Mammary epithelial cell (primary cell): ENCODE measurements at regions of chr1 and their contacts with region 1.

Region 1: GRCh38 chr1:201361652-201362504 is 15.6 kb downstream of the TNNT2 start:
- DNase-seq: peak; percentile 29
- H3K4me3 ChIP-seq: no peak overlapping the region
- H3K27ac ChIP-seq: no peak overlapping the region
- H3K4me1 ChIP-seq: peaks cover 11% of the 10 kb centered on the region
- H3K27me3 ChIP-seq: no peaks in the 10 kb centered on the region
- CTCF ChIP-seq: peak; percentile 86 to 93

Region 2: DNA sequence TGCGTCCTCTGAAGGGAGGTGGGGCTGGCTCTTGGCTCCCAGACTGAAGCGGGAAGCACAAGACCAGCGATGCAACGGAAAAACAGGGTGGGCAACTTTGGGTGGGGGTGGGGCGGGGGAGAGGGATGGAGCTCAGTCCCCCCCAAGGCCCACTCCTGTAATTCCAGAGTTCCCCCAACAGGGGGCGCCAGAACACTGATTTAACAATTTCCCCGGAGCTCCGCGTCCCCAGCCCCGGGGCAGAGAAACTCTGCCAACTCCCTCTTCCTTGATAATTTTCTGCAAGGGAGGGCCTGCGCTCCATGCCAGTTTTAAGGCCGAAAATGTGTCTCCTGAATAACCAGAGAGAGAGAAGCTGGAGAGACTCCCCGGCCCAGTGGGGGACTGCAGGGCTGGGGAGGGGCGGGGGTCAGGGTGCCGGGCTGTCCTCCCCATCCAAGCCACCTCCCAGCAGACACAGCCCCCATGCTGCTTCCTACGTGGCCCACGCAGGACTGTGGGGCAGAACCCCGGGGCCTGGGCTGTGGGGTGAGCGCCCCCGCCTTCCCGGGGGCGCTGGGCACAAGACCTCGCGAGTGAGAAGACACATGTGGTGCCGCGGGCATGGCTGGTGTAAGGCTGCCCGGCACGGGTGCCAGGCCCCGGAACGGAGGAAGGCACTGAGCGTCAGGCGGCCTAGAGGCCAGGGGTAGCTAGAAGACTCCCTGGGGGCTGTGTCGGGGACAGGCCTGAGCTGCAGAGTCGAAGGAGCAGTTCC is 389.7 kb before region 1 on chr1:
- CTCF ChIA-PET with region 1: no interaction called
- dilution Hi-C with region 1: no loop called
- in situ Hi-C with region 1: no loop called
- intact Hi-C with region 1: loop called (anchors 10 kb)
- DNase-seq: peak; percentile 6
- H3K4me3 ChIP-seq: no peak overlapping the region
- H3K27ac ChIP-seq: no peak overlapping the region
- H3K4me1 ChIP-seq: no peaks in the 10 kb centered on the region
- H3K27me3 ChIP-seq: no peaks in the 10 kb centered on the region
- CTCF ChIP-seq: peak; percentile 37 to 70

Region 3: DNA sequence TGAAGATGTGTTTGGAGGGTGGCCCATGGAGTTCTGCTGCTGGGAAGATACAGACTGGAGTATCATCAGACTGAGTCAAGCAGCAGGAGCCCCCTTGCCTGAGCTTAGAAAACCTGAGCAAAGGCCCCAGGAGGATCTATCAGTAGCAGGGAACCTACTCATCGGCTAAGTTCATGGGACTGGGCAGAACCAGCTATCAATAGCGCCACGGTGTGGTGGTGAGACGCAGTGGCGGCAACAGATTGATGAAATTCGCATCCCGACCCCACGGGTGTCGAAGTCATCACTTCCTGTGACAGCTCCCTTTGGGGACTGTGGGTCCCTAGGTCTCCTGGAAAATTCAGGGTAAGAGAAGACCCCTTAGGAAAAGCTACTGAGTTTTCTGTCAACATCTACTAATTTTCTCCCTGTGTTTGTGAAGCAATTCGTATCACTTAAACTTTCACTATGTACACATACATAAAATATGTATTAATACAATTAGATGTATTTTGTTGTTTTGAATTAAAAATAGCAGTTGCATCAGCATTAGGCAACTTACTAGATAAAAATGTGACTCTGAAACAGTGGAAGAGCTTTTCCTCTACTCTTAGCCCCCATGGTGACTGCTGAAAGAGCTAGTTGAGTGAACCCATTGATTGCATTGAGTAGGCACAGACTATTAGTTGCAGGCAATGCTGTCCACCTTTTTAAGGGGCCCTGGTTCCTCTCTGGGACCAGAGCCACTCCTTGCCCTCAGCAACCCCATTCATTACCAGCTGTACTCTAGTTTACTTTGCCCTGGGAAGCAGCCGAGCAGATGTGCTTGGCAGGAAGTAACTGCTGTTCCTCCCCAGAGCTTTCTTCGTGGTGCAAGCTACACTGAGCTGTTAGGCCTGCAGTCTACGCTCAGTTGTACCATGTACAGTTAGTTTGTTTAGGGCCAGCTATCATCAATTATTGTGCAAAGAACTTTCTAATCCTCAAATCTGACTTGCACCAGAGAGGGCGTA is 242.4 kb before region 1 on chr1:
- CTCF ChIA-PET with region 1: no interaction called
- dilution Hi-C with region 1: no loop called
- in situ Hi-C with region 1: no loop called
- intact Hi-C with region 1: no loop called
- DNase-seq: no peak
- H3K4me3 ChIP-seq: no peak overlapping the region
- H3K27ac ChIP-seq: no peak overlapping the region
- H3K4me1 ChIP-seq: peaks cover 3% of the 10 kb centered on the region
- H3K27me3 ChIP-seq: no peaks in the 10 kb centered on the region
- CTCF ChIP-seq: peak; percentile 60 to 71

Region 4: GRCh38 chr1:201222125-201222524 is 139.8 kb before region 1 on chr1:
- CTCF ChIA-PET with region 1: no interaction called
- dilution Hi-C with region 1: loop called (anchors 5 kb)
- in situ Hi-C with region 1: no loop called
- intact Hi-C with region 1: loop called (anchors 1 kb)
- DNase-seq: no peak
- H3K4me3 ChIP-seq: no peak overlapping the region
- H3K27ac ChIP-seq: no peak overlapping the region
- H3K4me1 ChIP-seq: no peaks in the 10 kb centered on the region
- H3K27me3 ChIP-seq: no peaks in the 10 kb centered on the region
- CTCF ChIP-seq: no peak

Region 5: GRCh38 chr1:201254625-201255506 is 107.0 kb before region 1 on chr1:
- CTCF ChIA-PET with region 1: interaction called, 5 read pairs
- dilution Hi-C with region 1: no loop called
- in situ Hi-C with region 1: loop called in 1 of 2 experiments (anchors 10 kb)
- intact Hi-C with region 1: loop called (anchors 1 kb)
- DNase-seq: peak; percentile 34
- H3K4me3 ChIP-seq: no peak overlapping the region
- H3K27ac ChIP-seq: no peak overlapping the region
- H3K4me1 ChIP-seq: peaks cover 11% of the 10 kb centered on the region
- H3K27me3 ChIP-seq: no peaks in the 10 kb centered on the region
- CTCF ChIP-seq: peak; percentile 89 to 99

Region 6: DNA sequence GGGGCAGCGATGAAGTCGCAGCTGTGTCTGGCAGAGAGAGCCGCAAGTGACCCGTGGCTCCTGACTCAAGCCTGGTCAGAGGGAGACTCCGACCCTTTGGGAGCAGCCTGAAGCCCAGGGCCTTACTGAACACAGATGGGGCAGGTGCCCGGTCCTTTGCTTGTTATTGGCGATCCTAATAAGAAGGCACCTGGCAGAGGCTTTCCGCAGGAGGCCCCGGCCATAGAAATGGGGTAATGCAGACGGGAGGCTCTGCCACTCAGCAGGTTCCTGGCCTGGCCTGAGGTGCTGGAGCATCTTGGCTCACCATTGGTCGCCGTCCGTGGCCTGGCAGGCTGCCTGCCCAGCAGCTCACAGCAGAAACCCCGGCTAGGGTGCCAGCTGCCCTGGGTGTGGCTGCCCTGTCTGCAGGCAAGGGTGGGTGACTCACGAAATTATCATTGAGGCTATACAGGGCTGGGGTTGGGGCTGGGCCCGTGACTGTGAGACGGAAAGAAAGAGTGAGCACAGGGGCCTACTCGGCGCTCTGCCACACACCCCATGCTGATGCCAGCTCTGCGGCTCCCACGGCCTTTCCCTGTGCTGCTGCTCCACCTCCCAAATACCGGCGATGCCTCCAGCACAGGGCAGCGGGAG is 86.7 kb before region 1 on chr1:
- CTCF ChIA-PET with region 1: no interaction called
- dilution Hi-C with region 1: loop called (anchors 5 kb)
- in situ Hi-C with region 1: no loop called
- intact Hi-C with region 1: no loop called
- DNase-seq: peak; percentile 100
- H3K4me3 ChIP-seq: no peak overlapping the region
- H3K27ac ChIP-seq: peak overlapping the region; percentile 73
- H3K4me1 ChIP-seq: peaks cover 37% of the 10 kb centered on the region
- H3K27me3 ChIP-seq: no peaks in the 10 kb centered on the region
- CTCF ChIP-seq: no peak